Ascending aorta (tissue), 2 donors: ENCODE measurements at regions of chr9 and their contacts with region 1.

Region 1: DNA sequence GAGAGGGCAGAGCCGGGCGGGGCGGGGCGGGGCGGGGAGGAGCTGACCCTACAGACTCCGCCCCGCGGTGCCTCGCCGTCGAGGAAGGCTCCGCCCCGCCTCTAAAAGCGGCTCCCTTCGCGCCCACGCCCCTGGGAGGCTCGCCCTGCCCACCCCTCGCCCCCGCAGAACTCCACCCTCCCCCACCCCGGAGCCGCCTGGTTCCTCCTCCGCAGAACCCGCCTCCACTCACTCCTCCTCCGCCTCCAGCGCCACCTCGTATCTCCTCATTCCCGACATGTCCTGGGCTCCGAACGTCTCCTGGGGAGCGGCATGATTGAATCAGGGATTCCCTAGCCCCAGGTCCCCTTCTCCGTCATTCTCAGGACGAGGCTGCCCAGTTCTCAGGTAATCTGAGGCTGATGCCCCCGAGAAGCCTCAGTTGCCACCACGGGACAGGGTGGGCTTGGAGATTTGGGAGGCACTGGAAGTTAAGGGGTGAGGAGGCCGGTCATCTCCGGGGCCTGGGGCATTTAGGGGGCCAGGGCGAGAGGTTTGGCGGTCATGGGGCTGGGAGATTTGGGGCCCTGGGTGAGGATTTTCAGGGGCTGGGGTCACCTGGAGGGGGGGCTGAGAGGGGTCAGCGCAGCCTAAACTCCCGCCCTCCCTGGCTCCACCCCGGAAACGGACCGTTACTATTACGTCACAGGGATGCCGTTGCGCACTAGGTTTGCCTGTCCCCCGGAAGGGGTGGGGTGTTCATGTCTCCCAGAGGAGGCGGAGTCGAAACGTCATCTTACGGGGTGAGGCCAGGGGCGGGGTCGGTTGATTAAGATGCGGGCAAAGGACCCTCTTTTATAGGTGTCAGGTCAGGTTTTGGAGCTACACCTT is 3.2 kb upstream of the CCL27 start:
- DNase-seq: peak; percentile 89 to 98
- H3K4me3 ChIP-seq: peak overlapping the region; percentile 88
- H3K27ac ChIP-seq: peak overlapping the region; percentile 99 to 100
- H3K4me1 ChIP-seq: peaks cover 5 to 14% of the 10 kb centered on the region in 2 donors
- H3K27me3 ChIP-seq: no peaks in the 10 kb centered on the region
- CTCF ChIP-seq: no peak

Region 2: GRCh38 chr9:34328987-34329832 is 336.4 kb before region 1 on chr9 and contains the starts of genes KIF24 and NUDT2:
- intact Hi-C with region 1: loop called (anchors 5 kb)
- DNase-seq: peak; percentile 97 to 99
- H3K4me3 ChIP-seq: peak within 1 kb of the TSS; percentile 84 to 89
- H3K27ac ChIP-seq: peak within 1 kb of the TSS; percentile 88 to 93
- H3K4me1 ChIP-seq: peaks cover 0 to 9% of the 10 kb centered on the region in 2 donors
- H3K27me3 ChIP-seq: no peaks in the 10 kb centered on the region
- CTCF ChIP-seq: no peak
- total RNA-seq, gene KIF24: 0.21 TPM
- total RNA-seq, gene NUDT2: not detected

Region 3: DNA sequence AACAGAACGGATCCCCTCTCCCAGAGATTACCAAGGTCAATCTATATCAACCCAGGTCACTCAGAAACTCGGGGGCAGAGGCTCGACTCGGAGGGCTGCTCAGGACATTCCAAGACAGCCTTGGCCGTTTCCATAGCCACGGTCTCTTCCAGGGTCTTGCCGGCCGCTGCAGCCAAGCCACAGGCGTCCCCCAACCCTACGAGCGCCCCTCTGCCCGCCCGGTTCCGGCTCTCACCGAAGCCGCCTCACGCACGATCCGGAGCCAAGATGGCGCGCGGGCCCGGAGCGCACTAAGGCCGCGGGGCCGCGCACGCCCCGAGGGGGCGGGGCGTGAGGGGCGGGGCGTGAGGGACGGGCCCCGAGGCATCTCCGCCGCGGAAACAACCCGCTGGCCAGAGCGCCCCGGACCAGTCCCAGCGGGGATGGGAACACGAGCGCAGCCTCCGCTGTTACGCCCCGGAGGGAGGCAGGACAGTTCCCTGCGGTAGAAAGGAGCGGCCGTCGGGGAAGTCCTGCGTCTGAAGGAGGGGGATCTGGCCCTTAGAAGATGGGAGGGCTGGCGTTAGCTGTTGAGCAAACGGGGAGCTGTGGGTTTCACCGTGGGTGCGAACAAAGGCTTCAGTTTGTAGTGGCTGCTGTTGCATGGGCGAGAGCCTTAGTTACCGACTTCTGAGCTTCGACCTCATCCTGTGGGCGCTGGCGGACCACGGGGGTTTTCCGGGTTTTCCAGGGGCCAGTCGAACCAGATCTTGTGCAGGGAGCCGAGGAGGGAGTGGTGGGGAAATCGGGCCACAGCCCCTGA is 53.6 kb before region 1 on chr9 and contains the start of gene RPP25L:
- intact Hi-C with region 1: loop called (anchors 5 kb)
- DNase-seq: peak; percentile 63 to 92
- H3K4me3 ChIP-seq: peak within 1 kb of the TSS; percentile 77 to 92
- H3K27ac ChIP-seq: peak within 1 kb of the TSS; percentile 71 to 83
- H3K4me1 ChIP-seq: peaks cover 3 to 13% of the 10 kb centered on the region in 2 donors
- H3K27me3 ChIP-seq: no peaks in the 10 kb centered on the region
- CTCF ChIP-seq: no peak
- total RNA-seq, gene RPP25L: 7.2 TPM

Region 4: GRCh38 chr9:34637356-34638137 is 28.1 kb before region 1 on chr9 and contains the start of gene SIGMAR1:
- intact Hi-C with region 1: loop called (anchors 1 kb)
- DNase-seq: peak; percentile 54 to 94
- H3K4me3 ChIP-seq: peak within 1 kb of the TSS; percentile 61 to 83
- H3K27ac ChIP-seq: peak within 1 kb of the TSS; percentile 76 to 79
- H3K4me1 ChIP-seq: peaks cover 0 to 13% of the 10 kb centered on the region in 2 donors
- H3K27me3 ChIP-seq: no peaks in the 10 kb centered on the region
- CTCF ChIP-seq: peak in 2 of 3 experiments; percentile 4 to 7
- total RNA-seq, gene SIGMAR1: 61.3 TPM

Region 5: GRCh38 chr9:34651876-34652601 is 13.6 kb before region 1 on chr9 and contains the start of gene IL11RA:
- intact Hi-C with region 1: loop called (anchors 1 kb)
- DNase-seq: peak; percentile 53 to 94
- H3K4me3 ChIP-seq: peak within 1 kb of the TSS; percentile 42 to 65
- H3K27ac ChIP-seq: peak within 1 kb of the TSS; percentile 89 to 96
- H3K4me1 ChIP-seq: peaks cover 33 to 64% of the 10 kb centered on the region in 2 donors
- H3K27me3 ChIP-seq: no peaks in the 10 kb centered on the region
- CTCF ChIP-seq: peak in 1 of 3 experiments; percentile 4
- total RNA-seq, gene IL11RA: 50.3 TPM

Region 6: DNA sequence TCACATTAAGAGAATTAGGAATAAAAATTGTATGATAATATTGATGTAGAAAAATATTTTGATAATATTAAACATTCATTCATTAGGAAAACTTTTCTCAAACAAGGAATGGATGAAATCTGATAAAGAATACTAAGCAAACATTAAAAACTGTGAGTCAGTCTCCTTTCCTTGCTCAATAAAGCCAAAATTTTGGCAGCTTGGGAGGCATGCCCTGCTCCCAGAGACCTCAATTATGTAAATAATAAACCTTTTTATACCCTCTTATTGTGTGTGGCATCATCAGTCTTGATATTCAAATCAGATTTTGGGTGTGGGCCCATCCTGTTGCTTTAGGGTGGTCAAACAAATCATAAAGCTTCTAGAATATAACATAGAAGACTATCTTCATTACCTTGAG is 80.9 kb after region 1 on chr9:
- intact Hi-C with region 1: no loop called
- DNase-seq: no peak
- H3K4me3 ChIP-seq: no peak overlapping the region
- H3K27ac ChIP-seq: no peak overlapping the region
- H3K4me1 ChIP-seq: no peaks in the 10 kb centered on the region
- H3K27me3 ChIP-seq: no peaks in the 10 kb centered on the region
- CTCF ChIP-seq: no peak

Region 7: DNA sequence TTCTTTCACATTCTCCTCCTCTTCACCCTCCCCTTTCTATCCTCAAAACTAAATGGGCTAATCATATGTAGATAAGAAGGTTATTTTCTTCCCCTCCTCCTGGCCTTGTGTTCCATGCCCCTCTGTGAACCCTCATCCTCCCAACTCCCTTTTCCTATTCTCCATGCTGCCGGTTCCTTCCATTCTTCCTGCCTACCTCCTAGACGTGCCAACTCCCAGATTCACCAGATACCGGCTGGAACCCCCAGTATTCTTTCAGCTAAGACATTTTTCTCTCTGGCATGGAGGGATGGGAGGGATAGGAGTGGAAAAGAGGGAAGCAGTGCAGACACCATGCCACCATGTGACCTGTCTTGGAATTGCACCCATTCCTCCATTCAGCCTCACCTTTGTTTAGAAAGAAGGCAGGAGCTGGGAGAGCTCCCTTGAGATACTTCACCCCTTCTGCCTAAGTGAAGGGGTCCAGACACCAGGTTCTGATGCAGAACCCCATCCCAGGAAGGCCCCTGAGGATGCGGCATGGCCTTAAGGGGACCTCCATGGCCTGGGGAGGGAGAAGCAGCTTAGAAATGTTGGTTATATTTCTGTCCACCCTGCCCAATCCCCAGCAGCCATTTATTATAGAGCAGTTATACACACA is 328.8 kb after region 1 on chr9:
- intact Hi-C with region 1: loop called (anchors 2 kb)
- DNase-seq: peak in 1 of 2 donors; percentile 72
- H3K4me3 ChIP-seq: peak overlapping the region; percentile 24 to 57
- H3K27ac ChIP-seq: peak overlapping the region; percentile 98 to 100
- H3K4me1 ChIP-seq: peaks cover 19 to 48% of the 10 kb centered on the region in 2 donors
- H3K27me3 ChIP-seq: no peaks in the 10 kb centered on the region
- CTCF ChIP-seq: peak; percentile 49 to 59 (median 54)

Region 8: DNA sequence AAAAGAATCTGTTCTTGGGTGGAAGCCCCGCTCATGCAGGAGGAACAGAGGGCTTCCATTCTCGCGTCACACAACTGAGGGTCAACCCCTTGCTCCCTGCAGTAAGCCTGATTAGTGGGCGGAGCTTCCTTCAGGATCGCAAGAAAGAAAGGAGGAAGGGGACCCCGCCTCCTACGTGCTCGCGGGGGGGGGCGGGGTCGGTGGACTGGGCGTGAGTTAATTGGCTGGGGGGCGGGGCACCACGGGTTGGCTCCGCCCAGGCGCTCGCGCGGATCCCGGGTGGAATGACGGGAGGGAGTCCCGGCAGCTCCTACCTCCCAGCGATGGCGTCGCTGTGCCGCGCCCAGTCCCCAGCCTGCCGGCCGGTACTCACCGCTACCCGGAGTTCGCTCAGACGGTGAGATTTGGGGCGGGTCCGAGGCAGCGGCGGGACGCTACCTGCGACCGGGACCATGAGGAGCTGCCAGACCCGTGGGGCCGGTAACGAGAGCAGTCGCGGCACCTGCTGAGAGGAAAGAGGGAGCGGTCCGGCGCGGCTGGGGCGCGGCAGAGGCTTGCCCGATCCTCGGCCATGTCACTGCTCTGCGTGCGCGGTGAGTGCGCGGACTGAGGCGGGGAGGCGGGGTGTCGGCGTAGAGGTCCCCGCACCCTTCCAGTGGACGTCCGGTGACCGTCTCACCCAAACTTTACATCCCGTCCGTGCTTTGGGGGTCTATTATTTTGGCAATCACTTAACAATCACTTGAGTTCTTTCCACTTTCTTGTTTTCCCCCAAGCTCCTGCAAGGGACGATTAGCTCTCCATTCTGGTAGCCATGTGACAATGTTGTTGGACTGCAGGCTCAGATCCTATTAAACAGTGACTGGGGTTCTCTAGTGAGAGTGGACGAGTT is 496.3 kb after region 1 on chr9 and contains the start of gene UNC13B:
- intact Hi-C with region 1: loop called (anchors 5 kb)
- DNase-seq: peak; percentile 82 to 97
- H3K4me3 ChIP-seq: peak within 1 kb of the TSS; percentile 80 to 88
- H3K27ac ChIP-seq: peak within 1 kb of the TSS; percentile 89 to 97
- H3K4me1 ChIP-seq: peaks cover 0 to 10% of the 10 kb centered on the region in 2 donors
- H3K27me3 ChIP-seq: no peaks in the 10 kb centered on the region
- CTCF ChIP-seq: peak in 2 of 3 experiments; percentile 25 to 28
- total RNA-seq, gene UNC13B: 26.5 TPM